ENCODE measurements at regions of chr15 and their contacts with region 1.

Region 1: DNA sequence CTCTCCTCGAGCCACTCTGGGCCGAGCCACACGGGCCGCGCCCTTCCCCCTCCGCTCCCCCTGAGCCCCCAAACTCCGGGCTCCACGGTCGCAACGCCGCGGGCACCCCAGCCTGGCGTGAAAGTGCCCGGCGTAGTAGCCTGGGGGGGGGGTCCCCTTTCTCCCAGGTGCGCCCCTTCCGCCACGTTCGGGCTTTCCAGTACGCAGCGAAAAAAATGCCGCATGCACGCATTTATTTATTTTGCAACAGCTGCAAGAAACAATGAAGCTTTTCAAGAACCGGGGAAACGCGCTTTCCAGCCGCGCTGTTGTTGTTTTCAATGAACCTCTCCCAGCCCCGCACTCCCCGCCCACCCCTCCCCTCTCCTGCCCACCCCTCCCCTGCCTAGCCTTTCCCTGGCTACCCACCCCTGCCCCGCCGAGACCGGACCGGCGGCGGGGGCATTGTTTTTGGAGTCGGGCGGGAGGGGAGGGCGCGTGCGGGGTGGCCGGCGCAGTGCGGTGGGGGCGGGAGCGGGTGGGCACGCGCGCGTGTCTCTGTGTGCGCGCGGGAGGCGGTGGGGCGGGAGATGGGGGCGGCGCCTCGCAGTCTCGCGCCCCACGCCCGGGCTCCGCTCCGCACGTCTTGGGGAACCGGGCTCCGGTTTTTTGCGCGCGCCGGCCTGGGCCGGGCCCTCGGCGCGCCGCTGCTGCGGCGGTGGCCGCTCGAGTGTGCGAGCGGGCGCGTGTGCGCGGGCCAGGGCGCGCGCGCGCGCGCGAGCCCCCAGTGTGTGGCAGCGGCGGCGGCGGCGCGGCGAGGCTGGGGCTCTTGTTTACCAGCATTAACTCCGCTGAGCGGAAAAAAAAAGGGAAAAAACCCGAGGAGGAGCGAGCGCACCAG is at the start of gene IGF1R:
- DNase-seq: peak; percentile 76 to 93
- H3K4me3 ChIP-seq: peak within 1 kb of the TSS; percentile 91
- H3K27ac ChIP-seq: peak within 1 kb of the TSS; percentile 60
- H3K4me1 ChIP-seq: peaks cover 13% of the 10 kb centered on the region
- H3K27me3 ChIP-seq: no peaks in the 10 kb centered on the region
- CTCF ChIP-seq: peak; percentile 52; the same call in 1 of the 2 replicates
- total RNA-seq, gene IGF1R: 71.3 and 78.9 TPM in 2 replicates

Region 2: DNA sequence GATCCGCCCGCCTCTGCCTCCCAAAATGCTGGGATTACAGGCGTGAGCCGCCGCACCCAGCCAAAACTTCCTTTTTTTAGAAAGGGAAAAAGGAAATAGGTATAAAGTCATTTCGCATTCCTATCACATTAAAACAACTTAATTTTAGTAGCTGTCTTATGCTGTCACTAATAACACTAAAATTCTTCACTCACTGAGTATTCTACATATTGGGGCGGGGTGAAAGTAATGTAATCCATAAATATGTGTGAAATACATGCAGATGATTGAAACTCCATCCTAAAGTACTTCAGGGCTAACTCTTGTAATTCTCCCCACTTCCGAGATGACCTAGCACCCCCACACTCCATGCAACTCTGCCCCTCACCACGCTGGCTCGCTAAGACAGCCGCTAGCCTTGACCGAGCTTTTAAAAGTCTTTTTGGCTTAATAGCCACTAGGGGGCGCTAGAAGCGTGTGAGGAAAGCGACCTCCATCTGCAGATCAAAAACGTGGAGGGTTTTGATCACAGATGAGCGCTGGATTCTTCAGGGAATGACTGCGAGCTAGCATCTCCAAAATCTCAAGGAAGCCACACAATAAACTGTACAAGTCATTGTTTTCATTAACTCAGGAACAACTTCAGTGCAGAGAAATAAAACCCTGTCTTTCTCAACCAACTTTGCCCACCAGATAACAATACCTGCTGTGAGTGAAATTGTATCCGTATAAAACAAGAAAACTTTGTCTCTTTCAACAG is 129.0 kb before region 1 on chr15:
- CTCF ChIA-PET with region 1: interaction called, 6 read pairs
- POLR2A ChIA-PET with region 1: no interaction called
- intact Hi-C with region 1: loop called (anchors 1 kb)
- DNase-seq: peak; percentile 47 to 62
- H3K4me3 ChIP-seq: no peak overlapping the region
- H3K27ac ChIP-seq: no peak overlapping the region
- H3K4me1 ChIP-seq: no peaks in the 10 kb centered on the region
- H3K27me3 ChIP-seq: 0 out of 2 replicates have a peak, but pooled peaks cover 5% of the 10 kb centered on the region
- CTCF ChIP-seq: peak; percentile 88

Region 3: DNA sequence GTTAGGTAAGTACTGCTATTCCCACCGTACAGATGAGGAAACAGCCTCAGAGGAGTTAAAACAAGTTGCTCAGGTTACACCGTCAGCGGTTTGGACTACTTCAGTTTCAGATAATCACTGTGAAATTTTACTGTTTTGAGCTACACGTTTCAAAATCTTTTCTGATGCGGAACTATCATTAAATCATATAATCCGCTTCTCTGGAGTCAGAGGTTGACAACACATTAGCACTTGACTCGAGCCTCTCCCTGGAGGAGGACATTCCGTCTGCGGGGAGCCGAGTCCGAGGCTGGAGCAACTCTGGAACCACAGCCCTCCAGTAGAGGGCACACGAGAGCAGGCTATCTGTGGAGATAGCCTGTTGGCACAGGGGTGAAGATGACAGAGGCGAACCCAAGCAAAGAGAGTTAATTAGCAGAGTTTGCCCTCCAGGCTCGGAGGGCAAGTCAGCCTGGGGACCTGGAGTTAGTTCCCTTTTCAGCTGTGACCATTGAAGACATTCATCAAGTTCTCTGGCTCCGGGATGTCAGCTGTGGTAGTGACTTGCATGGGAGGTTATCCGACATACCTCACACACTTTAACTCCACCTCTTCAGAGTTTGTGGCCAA is 131.6 kb after region 1 on chr15:
- CTCF ChIA-PET with region 1: no interaction called
- POLR2A ChIA-PET with region 1: no interaction called
- intact Hi-C with region 1: loop called (anchors 2 kb)
- DNase-seq: peak; percentile 62 to 77
- H3K4me3 ChIP-seq: no peak overlapping the region
- H3K27ac ChIP-seq: no peak overlapping the region
- H3K4me1 ChIP-seq: peaks cover 7% of the 10 kb centered on the region; the same call in 1 of the 2 replicates
- H3K27me3 ChIP-seq: no peaks in the 10 kb centered on the region
- CTCF ChIP-seq: peak; percentile 91

Region 4: GRCh38 chr15:98873441-98874201 is 225.6 kb after region 1 on chr15:
- CTCF ChIA-PET with region 1: interaction called, 14 read pairs
- POLR2A ChIA-PET with region 1: no interaction called
- intact Hi-C with region 1: no loop called
- DNase-seq: peak; percentile 79 to 92
- H3K4me3 ChIP-seq: peak overlapping the region; percentile 44
- H3K27ac ChIP-seq: peak overlapping the region; percentile 95
- H3K4me1 ChIP-seq: peaks cover 80% of the 10 kb centered on the region
- H3K27me3 ChIP-seq: no peaks in the 10 kb centered on the region
- CTCF ChIP-seq: no peak

Region 5: DNA sequence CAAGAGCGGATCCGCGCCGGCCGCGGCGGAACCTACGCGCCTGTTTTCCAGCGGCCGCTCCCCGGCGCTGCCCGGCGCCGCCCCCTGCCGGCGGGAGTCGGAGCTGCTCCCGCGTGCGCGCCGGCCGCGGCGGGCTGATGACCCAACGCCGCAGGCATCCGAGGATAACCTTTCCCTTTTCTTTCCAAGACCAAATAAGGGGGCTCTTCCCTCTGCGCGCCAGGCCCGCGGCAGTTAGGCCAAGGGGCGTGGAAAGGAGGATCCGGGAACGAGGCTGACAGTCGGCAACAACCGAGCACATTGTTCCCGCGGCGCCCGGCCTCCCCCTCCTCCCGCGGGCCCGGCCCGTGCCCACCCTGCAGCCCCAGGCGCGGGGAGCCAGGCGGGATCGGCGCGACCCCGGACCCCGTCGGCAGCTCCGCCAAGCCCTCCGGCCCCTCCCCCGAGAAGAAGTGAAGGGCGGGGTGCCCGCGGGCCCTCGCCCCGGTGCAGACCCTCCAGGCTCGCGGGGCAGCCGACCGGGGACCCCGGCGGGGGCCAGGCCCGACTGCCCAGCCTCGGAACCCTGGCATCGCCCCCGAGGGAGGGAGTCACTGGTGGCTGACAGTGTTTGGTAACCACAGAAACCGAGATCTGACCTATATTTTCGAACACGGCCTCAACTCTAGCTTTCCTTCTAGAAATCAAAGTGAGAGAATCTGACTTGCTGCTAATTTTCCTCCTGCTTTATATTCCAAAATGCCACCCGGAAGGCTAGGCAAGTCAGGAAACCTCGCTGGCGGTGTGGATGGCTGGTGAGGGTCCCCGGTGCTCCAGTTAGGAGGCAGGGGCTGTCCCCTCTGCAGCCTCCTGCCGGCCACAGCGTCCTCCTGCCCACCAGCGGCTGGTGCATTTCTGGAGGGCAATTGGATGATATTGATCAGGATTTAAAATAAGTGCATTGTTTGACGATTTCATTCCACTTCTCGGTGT is 411.3 kb after region 1 on chr15:
- CTCF ChIA-PET with region 1: no interaction called
- POLR2A ChIA-PET with region 1: no interaction called
- intact Hi-C with region 1: loop called (anchors 2 kb)
- DNase-seq: peak; percentile 49 to 81
- H3K4me3 ChIP-seq: peak overlapping the region; percentile 56; the same call in 1 of the 2 replicates
- H3K27ac ChIP-seq: no peak overlapping the region
- H3K4me1 ChIP-seq: no peaks in the 10 kb centered on the region; the same call in 1 of the 2 replicates
- H3K27me3 ChIP-seq: peaks cover 25% of the 10 kb centered on the region
- CTCF ChIP-seq: peak; percentile 43

Region 6: DNA sequence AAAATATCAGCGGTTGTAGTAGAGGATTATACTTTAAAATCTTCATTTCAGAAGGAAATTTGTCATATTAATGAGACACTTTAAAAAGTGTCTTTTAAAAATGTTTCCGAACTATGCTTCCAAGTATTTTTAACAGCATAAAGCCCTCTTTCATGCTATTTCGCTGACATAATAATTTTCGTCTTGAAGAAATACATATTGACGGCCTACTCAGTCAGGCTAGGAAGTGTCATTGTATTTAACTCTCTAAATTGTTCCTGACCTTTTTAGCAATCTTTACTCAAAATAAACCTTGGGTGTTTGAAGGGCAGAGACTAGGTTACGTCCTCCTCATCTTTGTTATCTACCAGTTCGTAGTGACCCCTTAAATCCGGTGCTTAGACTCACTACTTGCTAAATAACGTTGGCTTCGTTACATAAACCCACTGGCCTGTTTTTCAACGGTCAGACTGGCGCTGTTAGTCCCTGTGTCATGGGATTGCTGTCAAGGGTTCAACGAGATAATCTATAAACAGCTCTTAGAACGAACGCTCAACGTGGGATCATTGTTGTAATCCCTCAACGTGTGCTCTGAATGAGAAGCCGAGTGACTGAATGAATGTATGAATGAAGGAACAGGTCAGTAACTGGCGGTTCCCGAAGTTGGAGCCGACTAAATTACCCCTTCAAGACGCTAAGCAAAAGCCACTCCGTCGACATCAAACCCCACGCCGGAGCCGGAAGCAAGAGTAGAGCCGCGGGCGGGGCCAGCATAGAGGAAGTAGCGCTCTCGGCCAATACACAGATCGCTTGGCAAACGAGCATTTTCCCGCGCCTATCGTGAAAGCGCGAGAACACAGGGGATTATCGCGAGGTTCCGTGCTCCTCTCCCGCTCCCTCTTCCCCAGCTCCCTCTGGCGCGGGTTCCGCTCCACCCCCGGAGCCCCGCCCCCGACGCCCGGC is 602.8 kb after region 1 on chr15:
- CTCF ChIA-PET with region 1: no interaction called
- POLR2A ChIA-PET with region 1: no interaction called
- intact Hi-C with region 1: loop called (anchors 10 kb)
- DNase-seq: peak; percentile 93 to 98
- H3K4me3 ChIP-seq: peak overlapping the region; percentile 98
- H3K27ac ChIP-seq: peak overlapping the region; percentile 74
- H3K4me1 ChIP-seq: peaks cover 20% of the 10 kb centered on the region
- H3K27me3 ChIP-seq: no peaks in the 10 kb centered on the region
- CTCF ChIP-seq: no peak